Naive thymus-derived CD4-positive, alpha-beta T cell (primary cell): ENCODE measurements at regions of chr7 and their contacts with region 1.

Region 1: DNA sequence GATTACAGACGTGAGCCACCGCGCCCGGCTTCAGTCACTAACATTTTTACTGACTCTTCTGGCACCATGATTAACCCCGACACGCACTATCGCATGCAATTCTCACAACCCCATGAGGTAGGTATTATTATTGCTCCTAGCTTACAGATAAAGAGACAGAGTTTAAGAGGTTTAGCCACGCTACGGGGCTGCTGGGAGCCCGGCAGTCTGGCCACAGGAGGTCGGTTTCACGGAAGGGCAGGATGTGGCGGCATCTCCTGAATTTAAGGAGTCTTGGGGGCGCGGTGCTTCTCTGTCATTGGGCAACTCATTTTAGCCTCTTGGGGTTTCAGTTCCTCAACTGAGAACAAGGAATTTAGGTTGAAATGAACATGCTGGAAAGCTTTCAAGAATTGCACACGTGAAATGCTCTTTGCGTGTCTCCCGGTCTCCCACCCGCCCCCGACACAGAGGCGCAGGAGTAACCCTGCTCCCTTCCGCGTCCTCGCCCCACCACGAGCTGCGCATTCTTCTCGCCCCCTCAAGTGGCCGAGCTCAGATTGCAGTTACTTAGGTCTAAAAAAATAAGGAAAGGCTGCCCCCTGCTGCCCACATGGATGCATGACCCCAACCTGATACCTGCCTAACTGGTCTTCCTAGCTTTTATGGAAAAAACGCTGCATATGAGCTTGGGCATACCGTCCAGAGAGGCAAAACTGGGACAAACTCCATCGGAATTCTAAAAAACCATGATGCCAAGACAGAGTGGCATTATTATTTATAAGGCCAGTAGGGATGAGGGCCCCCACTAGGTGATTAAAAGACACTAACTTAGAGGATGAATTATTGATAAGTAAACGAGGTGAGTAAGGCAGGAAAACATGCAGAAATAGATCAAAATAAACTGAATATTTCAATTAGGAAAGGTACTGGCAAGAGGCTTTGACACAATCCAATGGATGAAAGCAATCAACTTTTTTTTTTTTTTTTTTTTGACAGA is 12.4 kb downstream of the PRSS2 start:
- DNase-seq: peak; percentile 54 to 84 (median 77)
- ATAC-seq: peak; percentile 74
- H3K4me3 ChIP-seq: peak overlapping the region; percentile 52
- H3K4me3 Mint-ChIP-seq: peak overlapping the region; percentile 70 to 99 (median 86)
- H3K27ac ChIP-seq: peak overlapping the region; percentile 98
- H3K27ac Mint-ChIP-seq: peak overlapping the region; percentile 75 to 100 (median 99)
- H3K4me1 ChIP-seq: peaks cover 0 to 5% of the 10 kb centered on the region in 2 donors
- H3K4me1 Mint-ChIP-seq: peaks cover 0 to 16% (median 10%) of the 10 kb centered on the region in 7 donors
- H3K27me3 ChIP-seq: no peaks in the 10 kb centered on the region
- H3K27me3 Mint-ChIP-seq: no peaks in the 10 kb centered on the region

Region 2: DNA sequence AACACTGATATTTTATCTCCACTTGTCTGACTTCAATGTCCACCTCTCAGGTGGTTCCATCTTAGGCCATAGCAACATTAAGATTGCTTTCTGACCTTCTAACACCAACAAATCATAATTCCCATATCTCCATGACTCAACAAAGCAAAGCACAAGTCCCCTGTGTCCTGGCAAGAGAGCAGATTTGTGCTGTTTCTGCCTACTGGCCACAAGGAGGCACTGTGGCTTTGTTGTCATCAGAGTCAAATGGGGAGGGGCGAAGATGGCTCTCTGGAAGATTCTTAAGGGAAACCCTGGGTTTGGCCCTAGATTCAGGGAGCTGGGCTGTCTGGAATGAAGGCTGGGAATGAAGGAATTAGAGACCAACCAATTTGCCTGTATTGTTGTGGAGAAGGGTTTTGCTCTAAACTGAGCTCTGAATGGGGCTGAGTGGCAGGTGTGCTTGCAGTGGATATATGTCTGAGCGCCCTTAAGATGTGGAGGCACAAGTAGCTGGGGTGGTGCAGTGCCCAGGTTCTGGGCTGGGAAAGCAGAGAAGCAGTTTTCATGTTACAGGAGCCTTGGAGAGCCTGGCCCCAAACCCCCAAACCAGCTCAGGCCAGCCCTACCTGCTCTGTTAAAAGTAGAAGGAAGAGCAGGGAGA is 370.5 kb before region 1 on chr7:
- CTCF ChIA-PET with region 1: no interaction called
- POLR2A ChIA-PET with region 1: no interaction called
- intact Hi-C with region 1: no loop called
- DNase-seq: peak in 8 of 9 donors; percentile 19 to 58 (median 38)
- ATAC-seq: peak; percentile 88
- H3K4me3 ChIP-seq: no peak overlapping the region
- H3K4me3 Mint-ChIP-seq: peak overlapping the region in 6 of 10 donors; percentile 8 to 56 (median 26)
- H3K27ac ChIP-seq: no peak overlapping the region
- H3K27ac Mint-ChIP-seq: peak overlapping the region in 3 of 9 donors; percentile 3 to 69 (median 6)
- H3K4me1 ChIP-seq: peaks cover 0 to 3% of the 10 kb centered on the region in 2 donors
- H3K4me1 Mint-ChIP-seq: peaks cover 4 to 7% (median 6%) of the 10 kb centered on the region in 7 donors
- H3K27me3 ChIP-seq: no peaks in the 10 kb centered on the region
- H3K27me3 Mint-ChIP-seq: peaks cover 0 to 19% (median 0%) of the 10 kb centered on the region in 5 donors

Region 3: GRCh38 chr7:142669074-142669654 is 114.0 kb before region 1 on chr7:
- CTCF ChIA-PET with region 1: interaction called, 14 read pairs
- POLR2A ChIA-PET with region 1: interaction called, 6 read pairs
- intact Hi-C with region 1: loop called (anchors 1 kb)
- DNase-seq: peak in 5 of 9 donors; percentile 14 to 40 (median 29)
- ATAC-seq: no peak
- H3K4me3 ChIP-seq: no peak overlapping the region
- H3K4me3 Mint-ChIP-seq: peak overlapping the region in 6 of 10 donors; percentile 15 to 64 (median 32)
- H3K27ac ChIP-seq: no peak overlapping the region
- H3K27ac Mint-ChIP-seq: peak overlapping the region in 7 of 9 donors; percentile 3 to 73 (median 49)
- H3K4me1 ChIP-seq: peaks cover 0 to 14% of the 10 kb centered on the region in 2 donors
- H3K4me1 Mint-ChIP-seq: peaks cover 11 to 34% (median 34%) of the 10 kb centered on the region in 7 donors
- H3K27me3 ChIP-seq: no peaks in the 10 kb centered on the region
- H3K27me3 Mint-ChIP-seq: no peaks in the 10 kb centered on the region

Region 4: DNA sequence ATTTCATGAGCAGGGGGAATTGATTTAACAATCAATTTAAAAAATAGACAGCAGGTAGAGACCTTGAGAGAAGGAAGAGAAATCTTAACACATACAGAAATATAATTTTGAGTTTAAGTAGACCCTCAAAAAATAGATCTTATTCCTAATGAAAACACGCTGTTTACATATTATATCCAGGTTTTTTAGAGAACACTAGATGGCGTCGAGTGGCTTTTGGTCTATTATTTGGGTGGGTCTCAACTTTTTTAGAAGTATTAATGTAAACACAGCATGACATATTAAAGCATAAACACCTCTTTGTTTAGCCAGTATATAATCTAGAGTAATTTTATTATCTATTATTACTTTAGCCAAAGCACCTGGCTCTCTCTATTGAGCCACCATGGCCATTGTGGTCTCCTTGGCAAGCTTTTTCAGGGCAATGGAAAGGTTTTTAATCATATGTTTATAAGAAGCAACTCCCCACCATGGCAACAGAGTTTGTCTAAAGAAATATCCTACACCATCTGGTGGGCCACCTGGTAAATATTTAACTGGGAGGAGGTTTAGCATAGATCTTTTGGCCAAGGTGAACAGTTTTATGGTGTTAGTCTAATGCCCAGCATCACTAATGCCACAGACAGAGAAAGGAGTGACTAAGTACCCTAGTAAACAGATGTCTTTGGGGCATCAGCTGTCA is 93.6 kb before region 1 on chr7:
- CTCF ChIA-PET with region 1: no interaction called
- POLR2A ChIA-PET with region 1: no interaction called
- intact Hi-C with region 1: loop called in 1 of 2 experiments (anchors 5 kb)
- DNase-seq: no peak
- ATAC-seq: no peak
- H3K4me3 ChIP-seq: no peak overlapping the region
- H3K4me3 Mint-ChIP-seq: no peak overlapping the region
- H3K27ac ChIP-seq: no peak overlapping the region
- H3K27ac Mint-ChIP-seq: peak overlapping the region in 2 of 9 donors; percentile 16 to 23
- H3K4me1 ChIP-seq: peaks cover 8 to 15% of the 10 kb centered on the region in 2 donors
- H3K4me1 Mint-ChIP-seq: peaks cover 11 to 30% (median 22%) of the 10 kb centered on the region in 7 donors
- H3K27me3 ChIP-seq: no peaks in the 10 kb centered on the region
- H3K27me3 Mint-ChIP-seq: no peaks in the 10 kb centered on the region

Region 5: GRCh38 chr7:142711746-142712619 is 71.2 kb before region 1 on chr7:
- CTCF ChIA-PET with region 1: interaction called, 20 read pairs
- POLR2A ChIA-PET with region 1: interaction called, 49 read pairs
- intact Hi-C with region 1: loop called (anchors 1 kb)
- DNase-seq: no peak
- ATAC-seq: peak; percentile 75
- H3K4me3 ChIP-seq: peak overlapping the region; percentile 46
- H3K4me3 Mint-ChIP-seq: peak overlapping the region; percentile 76 to 94 (median 88)
- H3K27ac ChIP-seq: peak overlapping the region; percentile 62
- H3K27ac Mint-ChIP-seq: peak overlapping the region; percentile 81 to 96 (median 91)
- H3K4me1 ChIP-seq: peaks cover 31 to 50% of the 10 kb centered on the region in 2 donors
- H3K4me1 Mint-ChIP-seq: peaks cover 20 to 76% (median 63%) of the 10 kb centered on the region in 7 donors
- H3K27me3 ChIP-seq: no peaks in the 10 kb centered on the region
- H3K27me3 Mint-ChIP-seq: peaks cover 0 to 1% (median 0%) of the 10 kb centered on the region in 5 donors

Region 6: GRCh38 chr7:142739923-142740492 is 43.2 kb before region 1 on chr7:
- CTCF ChIA-PET with region 1: no interaction called
- POLR2A ChIA-PET with region 1: no interaction called
- intact Hi-C with region 1: no loop called
- DNase-seq: peak in 1 of 9 donors; percentile 18
- ATAC-seq: peak; percentile 50
- H3K4me3 ChIP-seq: no peak overlapping the region
- H3K4me3 Mint-ChIP-seq: peak overlapping the region; percentile 13 to 69 (median 39)
- H3K27ac ChIP-seq: no peak overlapping the region
- H3K27ac Mint-ChIP-seq: peak overlapping the region in 5 of 9 donors; percentile 46 to 88 (median 67)
- H3K4me1 ChIP-seq: no peaks in the 10 kb centered on the region
- H3K4me1 Mint-ChIP-seq: peaks cover 0 to 9% (median 5%) of the 10 kb centered on the region in 7 donors
- H3K27me3 ChIP-seq: no peaks in the 10 kb centered on the region
- H3K27me3 Mint-ChIP-seq: peaks cover 0 to 7% (median 0%) of the 10 kb centered on the region in 5 donors

Region 7: GRCh38 chr7:142835487-142835886 is 52.3 kb after region 1 on chr7:
- CTCF ChIA-PET with region 1: interaction called, 8 read pairs
- POLR2A ChIA-PET with region 1: interaction called, 10 read pairs
- intact Hi-C with region 1: loop called in 1 of 2 experiments (anchors 1 kb)
- DNase-seq: peak in 5 of 9 donors; percentile 29 to 57 (median 42)
- ATAC-seq: no peak
- H3K4me3 ChIP-seq: no peak overlapping the region
- H3K4me3 Mint-ChIP-seq: peak overlapping the region in 5 of 10 donors; percentile 18 to 61 (median 45)
- H3K27ac ChIP-seq: no peak overlapping the region
- H3K27ac Mint-ChIP-seq: peak overlapping the region in 8 of 9 donors; percentile 15 to 88 (median 70)
- H3K4me1 ChIP-seq: no peaks in the 10 kb centered on the region
- H3K4me1 Mint-ChIP-seq: peaks cover 2 to 34% (median 16%) of the 10 kb centered on the region in 7 donors
- H3K27me3 ChIP-seq: no peaks in the 10 kb centered on the region
- H3K27me3 Mint-ChIP-seq: peaks cover 0 to 4% (median 0%) of the 10 kb centered on the region in 5 donors